ENCODE measurements at regions of chrX and their contacts with region 1.

Region 1: DNA sequence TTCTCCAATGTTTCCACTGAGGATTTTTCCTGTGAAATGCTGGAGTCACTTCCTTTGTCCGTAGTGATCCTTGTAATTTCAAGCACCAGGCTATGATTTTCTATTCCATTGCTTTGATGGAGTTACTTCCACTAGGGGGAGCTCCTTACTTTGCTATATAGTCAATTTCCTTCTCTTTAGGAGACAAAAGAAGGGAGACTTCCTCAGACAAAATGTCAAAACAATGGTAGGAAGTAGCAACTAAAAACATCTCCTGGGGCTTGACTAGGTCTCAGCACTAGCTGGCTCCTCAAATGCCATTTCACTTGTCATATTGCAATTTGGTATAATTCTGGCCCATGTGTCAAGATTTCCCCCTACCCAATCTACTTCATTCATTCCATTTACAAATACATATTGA is 24.1 kb downstream of the ZCCHC12 start:
- DNase-seq: no peak
- ATAC-seq: peak in 3 of 4 donors; percentile 80 to 88 (median 87)
- H3K4me3 ChIP-seq: no peak overlapping the region
- H3K27ac ChIP-seq: no peak overlapping the region
- H3K4me1 ChIP-seq: no peaks in the 10 kb centered on the region
- H3K27me3 ChIP-seq: no peaks in the 10 kb centered on the region
- CTCF ChIP-seq: peak; percentile 45 to 64 (median 58)

Region 2: DNA sequence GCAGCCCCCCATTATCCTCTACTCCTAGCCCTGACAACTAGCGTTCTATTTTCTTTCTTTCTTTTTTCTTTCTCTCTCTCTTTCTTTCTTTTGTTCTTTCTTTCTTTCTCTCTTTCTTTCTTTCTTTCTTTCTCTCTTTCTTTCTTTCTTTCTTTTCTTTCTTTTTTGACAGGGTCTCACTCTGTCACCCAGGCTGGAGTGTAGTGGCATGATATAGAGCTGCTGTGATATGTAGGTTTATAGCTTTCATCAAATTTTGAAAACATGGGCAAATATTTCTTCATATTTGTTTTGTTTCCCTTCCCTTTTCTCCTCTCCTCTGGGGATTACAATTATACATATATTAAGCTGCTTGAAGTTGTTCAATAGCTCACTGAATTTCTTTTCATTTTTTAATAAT is 87.7 kb after region 1 on chrX:
- intact Hi-C with region 1: no loop called
- DNase-seq: no peak
- ATAC-seq: no peak
- H3K4me3 ChIP-seq: no peak overlapping the region
- H3K27ac ChIP-seq: no peak overlapping the region
- H3K4me1 ChIP-seq: no peaks in the 10 kb centered on the region
- H3K27me3 ChIP-seq: peaks cover 0 to 3% (median 0%) of the 10 kb centered on the region in 4 donors
- CTCF ChIP-seq: no peak

Region 3: GRCh38 chrX:119004920-119005524 is 157.3 kb after region 1 on chrX:
- intact Hi-C with region 1: loop called in 2 of 3 experiments (anchors 10 kb)
- DNase-seq: peak in 5 of 6 donors; percentile 7 to 87 (median 64)
- ATAC-seq: peak; percentile 80 to 94 (median 90)
- H3K4me3 ChIP-seq: no peak overlapping the region
- H3K27ac ChIP-seq: no peak overlapping the region
- H3K4me1 ChIP-seq: no peaks in the 10 kb centered on the region
- H3K27me3 ChIP-seq: peaks cover 0 to 3% (median 0%) of the 10 kb centered on the region in 4 donors
- CTCF ChIP-seq: peak; percentile 85 to 96 (median 93)

Region 4: GRCh38 chrX:119067023-119067739 is 219.5 kb after region 1 on chrX:
- intact Hi-C with region 1: loop called in 2 of 3 experiments (anchors 10 kb)
- DNase-seq: peak in 5 of 6 donors; percentile 21 to 67 (median 53)
- ATAC-seq: peak; percentile 68 to 95 (median 90)
- H3K4me3 ChIP-seq: no peak overlapping the region
- H3K27ac ChIP-seq: no peak overlapping the region
- H3K4me1 ChIP-seq: no peaks in the 10 kb centered on the region
- H3K27me3 ChIP-seq: peaks cover 0 to 8% (median 0%) of the 10 kb centered on the region in 4 donors
- CTCF ChIP-seq: peak; percentile 14 to 49 (median 43)

Region 5: DNA sequence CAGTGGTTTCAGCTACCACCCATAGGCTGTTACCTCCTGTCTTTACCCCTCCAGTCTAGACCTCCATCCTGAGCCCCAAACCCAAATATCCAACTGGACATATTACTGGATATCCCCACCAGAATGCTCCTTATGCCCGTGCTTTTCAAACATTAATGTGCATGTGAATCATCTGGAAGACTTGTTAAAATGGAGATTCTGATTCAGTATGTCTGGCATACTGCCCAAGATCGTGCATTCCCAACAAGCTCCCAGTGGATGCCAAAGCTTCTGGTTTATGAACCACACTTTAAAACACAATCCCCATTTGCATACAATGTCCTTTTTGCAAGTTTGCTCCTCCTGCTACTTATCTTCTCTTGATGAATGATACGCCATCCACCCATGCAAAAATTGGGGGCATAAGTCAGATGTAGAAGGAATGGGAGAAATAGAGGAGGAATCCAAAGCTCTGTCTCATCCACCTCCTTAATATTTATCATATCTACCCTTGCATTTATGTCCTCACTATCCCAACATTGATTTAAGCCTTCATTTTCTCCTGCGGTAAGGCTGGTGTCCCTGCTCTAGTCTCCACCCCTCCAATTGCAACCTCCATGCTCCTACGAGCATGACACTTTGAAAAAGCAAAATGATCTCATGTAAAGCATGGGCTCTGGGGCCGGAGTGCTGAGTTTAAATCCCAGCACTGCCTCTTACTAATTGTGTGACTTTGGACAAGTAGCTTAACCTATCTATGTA is 381.0 kb after region 1 on chrX:
- intact Hi-C with region 1: loop called in 1 of 3 experiments (anchors 10 kb)
- DNase-seq: no peak
- ATAC-seq: no peak
- H3K4me3 ChIP-seq: no peak overlapping the region
- H3K27ac ChIP-seq: no peak overlapping the region
- H3K4me1 ChIP-seq: no peaks in the 10 kb centered on the region
- H3K27me3 ChIP-seq: peaks cover 0 to 7% (median 0%) of the 10 kb centered on the region in 4 donors
- CTCF ChIP-seq: no peak

Measured in pancreas (tissue), 10 donors.